Mammary epithelial cell (primary cell): ENCODE measurements at regions of chrX and their contacts with region 1.

Region 1: GRCh38 chrX:151396825-151397740 is at the start of gene VMA21:
- DNase-seq: peak; percentile 71
- H3K4me3 ChIP-seq: peak within 1 kb of the TSS; percentile 69 to 84 (median 77)
- H3K27ac ChIP-seq: peak within 1 kb of the TSS; percentile 75
- H3K4me1 ChIP-seq: no peaks in the 10 kb centered on the region
- H3K27me3 ChIP-seq: no peaks in the 10 kb centered on the region
- CTCF ChIP-seq: no peak
- total RNA-seq, gene VMA21: 40.5 to 73.3 TPM

Region 2: DNA sequence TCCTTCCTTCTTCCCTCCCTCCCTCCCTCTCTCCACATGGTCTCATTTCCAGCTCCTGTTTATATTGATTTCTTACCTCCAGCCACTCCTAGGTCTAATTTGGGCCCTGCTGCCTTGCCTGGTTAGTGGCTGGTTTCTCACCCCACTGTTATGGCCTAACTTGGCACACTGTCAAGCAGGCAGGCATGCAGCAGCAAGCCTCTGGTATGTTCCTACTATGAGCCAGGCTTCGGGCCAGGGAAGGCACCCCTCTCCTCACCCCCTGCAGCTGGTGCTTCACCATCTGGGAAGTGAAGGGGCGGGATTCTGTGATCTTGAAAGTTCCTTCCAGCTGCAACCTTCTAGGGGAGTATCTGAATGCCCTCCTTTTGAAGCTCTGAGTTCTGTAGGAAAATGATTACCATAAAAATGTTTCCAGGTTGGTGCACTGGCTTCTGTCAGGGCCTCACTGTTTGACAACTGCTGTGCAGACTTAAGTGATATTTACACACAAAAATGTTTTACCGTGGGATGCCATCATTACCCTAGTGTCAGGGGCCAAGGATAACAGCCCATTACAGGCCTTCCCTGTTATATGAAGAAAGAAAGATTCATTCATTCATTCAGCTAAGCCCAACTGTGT is 10.1 kb before region 1 on chrX:
- CTCF ChIA-PET with region 1: no interaction called
- dilution Hi-C with region 1: no loop called
- in situ Hi-C with region 1: no loop called
- intact Hi-C with region 1: loop called (anchors 1 kb)
- DNase-seq: no peak
- H3K4me3 ChIP-seq: no peak overlapping the region
- H3K27ac ChIP-seq: no peak overlapping the region
- H3K4me1 ChIP-seq: no peaks in the 10 kb centered on the region
- H3K27me3 ChIP-seq: no peaks in the 10 kb centered on the region
- CTCF ChIP-seq: no peak